Colonic mucosa (tissue), 4 donors: ENCODE measurements at regions of chr11 and their contacts with region 1.

Region 1: DNA sequence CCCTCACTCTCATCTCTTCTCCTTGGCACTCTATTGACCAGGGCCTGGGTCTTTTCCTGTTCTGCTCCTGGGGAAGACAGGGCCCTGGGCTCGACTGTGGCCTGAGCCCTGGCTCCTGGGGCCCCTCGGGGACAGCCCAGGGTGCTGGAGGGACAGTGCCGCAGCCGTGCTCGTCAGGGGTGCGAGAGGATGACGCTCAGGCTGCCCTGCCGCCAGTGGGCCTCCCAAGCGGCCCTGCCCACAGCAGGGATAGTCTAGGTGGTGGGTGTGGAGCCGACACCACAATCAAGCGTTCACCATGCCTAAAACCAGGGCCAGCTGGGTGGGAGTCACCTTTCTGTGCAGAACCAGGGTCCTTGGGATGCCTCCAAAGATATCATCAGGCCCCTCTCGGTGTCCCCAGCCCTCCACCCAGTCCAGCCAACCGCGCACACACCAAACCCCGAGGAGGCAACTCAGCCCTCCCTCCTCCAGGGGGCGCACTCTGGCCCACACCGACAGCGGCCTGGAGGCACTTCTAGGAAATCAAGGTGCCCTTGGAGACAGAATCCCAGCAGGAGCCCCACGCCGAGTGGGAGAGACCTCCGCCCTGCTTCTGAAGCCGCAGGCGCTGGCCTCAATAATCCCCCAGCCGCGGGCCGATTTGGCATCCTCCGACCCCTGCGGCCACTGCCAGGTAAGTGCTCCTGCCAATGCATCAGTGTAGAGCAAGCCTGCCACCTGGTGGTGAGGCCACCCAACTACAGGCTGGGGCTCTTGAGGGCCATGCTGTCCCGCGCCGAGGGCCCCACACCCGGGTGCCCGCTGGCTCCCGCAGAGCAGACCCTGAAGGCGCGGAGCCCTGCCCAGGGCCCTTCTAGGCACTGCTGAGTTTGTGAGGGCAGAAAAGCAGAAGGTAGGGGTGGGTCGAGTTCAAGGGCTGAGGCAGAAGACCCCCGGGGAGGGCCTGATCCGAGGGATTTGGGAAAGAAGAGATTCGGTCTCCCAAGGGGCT is 496.4 kb downstream of the BUD13 start:
- DNase-seq: peak; percentile 83
- H3K4me3 ChIP-seq: peak overlapping the region; percentile 8
- H3K27ac ChIP-seq: no peak overlapping the region
- H3K4me1 ChIP-seq: no peaks in the 10 kb centered on the region
- H3K27me3 ChIP-seq: no peaks in the 10 kb centered on the region
- CTCF ChIP-seq: peak; percentile 100

Region 2: DNA sequence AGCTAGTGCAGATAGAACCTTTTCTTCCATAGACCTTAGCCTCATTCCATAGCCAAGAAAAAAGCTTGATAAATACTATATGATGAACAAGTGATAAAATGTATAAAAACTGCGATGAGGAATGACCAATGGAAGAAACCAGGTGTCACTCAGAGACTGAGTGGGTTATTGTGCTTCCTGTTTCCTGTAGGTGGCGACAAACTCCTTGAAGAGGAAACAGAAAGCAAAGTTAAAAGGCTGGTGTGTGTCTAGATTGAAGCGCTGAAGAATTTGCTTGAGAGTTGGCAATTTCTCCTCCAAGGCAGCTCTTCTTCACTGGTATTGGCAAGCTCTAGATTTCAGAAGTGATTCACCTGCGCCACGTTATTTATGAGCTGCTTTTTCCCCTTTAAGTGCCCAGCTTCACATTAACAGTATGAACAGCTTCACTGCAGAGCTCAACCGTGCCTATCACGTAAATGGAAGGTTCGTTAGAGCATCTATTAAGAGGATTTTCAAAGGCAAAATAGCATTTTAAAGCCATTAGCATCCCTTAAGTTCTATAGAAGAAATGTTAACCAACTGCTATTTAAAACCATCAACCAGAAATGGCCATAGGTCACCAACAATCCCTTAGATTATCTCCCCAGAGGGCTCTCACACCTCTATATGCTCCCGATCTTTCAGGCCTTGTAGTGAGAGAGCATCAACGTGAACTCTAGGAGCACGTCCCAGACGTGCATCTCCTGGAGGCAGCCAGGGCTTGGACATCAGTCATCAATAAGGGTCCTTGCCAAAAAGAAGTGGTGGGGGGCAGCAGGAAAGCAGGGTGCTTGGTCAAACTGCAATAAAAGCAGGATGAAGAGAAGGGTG is 951.5 kb before region 1 on chr11:
- intact Hi-C with region 1: loop called (anchors 5 kb)
- DNase-seq: peak; percentile 36
- H3K4me3 ChIP-seq: no peak overlapping the region
- H3K27ac ChIP-seq: no peak overlapping the region
- H3K4me1 ChIP-seq: no peaks in the 10 kb centered on the region
- H3K27me3 ChIP-seq: no peaks in the 10 kb centered on the region
- CTCF ChIP-seq: peak; percentile 71

Region 3: DNA sequence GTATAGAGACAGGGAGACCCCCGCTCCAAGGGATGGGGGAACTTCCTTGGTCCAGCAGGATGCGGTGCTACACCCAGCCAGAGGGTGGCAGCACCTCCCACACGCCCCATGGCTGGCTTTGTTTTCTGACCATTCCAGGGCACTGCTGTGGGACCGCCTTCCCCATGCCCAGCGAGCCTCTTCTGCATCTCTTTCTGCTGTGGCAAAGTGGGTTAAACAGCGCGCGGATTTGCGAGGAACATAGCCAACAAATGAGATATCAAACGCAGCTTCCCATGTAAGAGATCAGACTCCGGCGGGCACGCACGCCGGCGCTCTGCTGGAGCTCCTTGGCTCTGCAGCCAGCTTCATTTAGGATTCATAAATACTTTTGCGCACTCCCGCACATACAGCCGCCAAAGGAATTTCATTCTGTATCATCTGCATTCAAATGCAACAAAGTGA is 286.3 kb before region 1 on chr11:
- intact Hi-C with region 1: loop called (anchors 5 kb)
- DNase-seq: no peak
- H3K4me3 ChIP-seq: no peak overlapping the region
- H3K27ac ChIP-seq: no peak overlapping the region
- H3K4me1 ChIP-seq: no peaks in the 10 kb centered on the region
- H3K27me3 ChIP-seq: no peaks in the 10 kb centered on the region
- CTCF ChIP-seq: peak; percentile 68